ENCODE measurements at regions of chr2 and their contacts with region 1.

Region 1: GRCh38 chr2:135741395-135742324 is at the start of gene UBXN4:
- DNase-seq: peak; percentile 98
- H3K4me3 Mint-ChIP-seq: peak within 1 kb of the TSS; percentile 98
- H3K27ac Mint-ChIP-seq: peak within 1 kb of the TSS; percentile 99
- H3K4me1 Mint-ChIP-seq: peaks cover 30% of the 10 kb centered on the region
- H3K27me3 Mint-ChIP-seq: no peaks in the 10 kb centered on the region
- total RNA-seq, gene UBXN4: 100 to 105 TPM

Region 2: GRCh38 chr2:135689679-135690078 is 52.0 kb before region 1 on chr2:
- CTCF ChIA-PET with region 1: no interaction called
- intact Hi-C with region 1: loop called (anchors 1 kb)
- DNase-seq: no peak
- H3K4me3 Mint-ChIP-seq: peak overlapping the region; percentile 45
- H3K27ac Mint-ChIP-seq: peak overlapping the region; percentile 76
- H3K4me1 Mint-ChIP-seq: peaks cover 28% of the 10 kb centered on the region
- H3K27me3 Mint-ChIP-seq: no peaks in the 10 kb centered on the region

Region 3: DNA sequence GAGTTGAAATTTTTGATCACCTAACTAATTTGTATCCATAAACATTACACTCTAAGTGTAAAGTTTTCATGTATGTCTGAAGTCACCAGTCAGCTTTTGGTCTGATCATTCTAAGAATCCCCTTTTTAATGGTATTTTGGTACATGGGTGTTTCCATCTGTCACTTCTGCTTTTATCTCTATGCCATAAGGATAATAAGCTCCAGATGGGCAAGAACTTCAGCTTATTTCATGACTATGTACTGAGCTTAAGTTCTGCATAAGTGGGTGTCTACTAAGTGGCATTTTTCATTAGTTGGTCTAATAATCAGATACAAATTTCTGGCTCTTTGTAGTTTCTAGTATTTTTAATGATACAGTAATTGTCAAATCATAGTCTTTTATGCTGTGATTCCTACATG is 20.4 kb after region 1 on chr2:
- CTCF ChIA-PET with region 1: interaction called, 3 read pairs
- intact Hi-C with region 1: loop called (anchors 2 kb)
- DNase-seq: no peak
- H3K4me3 Mint-ChIP-seq: no peak overlapping the region
- H3K27ac Mint-ChIP-seq: no peak overlapping the region
- H3K4me1 Mint-ChIP-seq: peaks cover 14% of the 10 kb centered on the region
- H3K27me3 Mint-ChIP-seq: no peaks in the 10 kb centered on the region

Region 4: GRCh38 chr2:135876066-135876711 is 134.5 kb after region 1 on chr2 and contains the start of gene MCM6:
- CTCF ChIA-PET with region 1: no interaction called
- intact Hi-C with region 1: loop called (anchors 1 kb)
- DNase-seq: peak; percentile 100
- H3K4me3 Mint-ChIP-seq: peak within 1 kb of the TSS; percentile 91
- H3K27ac Mint-ChIP-seq: peak within 1 kb of the TSS; percentile 99
- H3K4me1 Mint-ChIP-seq: peaks cover 39% of the 10 kb centered on the region
- H3K27me3 Mint-ChIP-seq: no peaks in the 10 kb centered on the region
- total RNA-seq, gene MCM6: 221 to 226 TPM